OCI-LY7 (cell line): ENCODE measurements at regions of chr13 and their contacts with region 1.

Region 1: DNA sequence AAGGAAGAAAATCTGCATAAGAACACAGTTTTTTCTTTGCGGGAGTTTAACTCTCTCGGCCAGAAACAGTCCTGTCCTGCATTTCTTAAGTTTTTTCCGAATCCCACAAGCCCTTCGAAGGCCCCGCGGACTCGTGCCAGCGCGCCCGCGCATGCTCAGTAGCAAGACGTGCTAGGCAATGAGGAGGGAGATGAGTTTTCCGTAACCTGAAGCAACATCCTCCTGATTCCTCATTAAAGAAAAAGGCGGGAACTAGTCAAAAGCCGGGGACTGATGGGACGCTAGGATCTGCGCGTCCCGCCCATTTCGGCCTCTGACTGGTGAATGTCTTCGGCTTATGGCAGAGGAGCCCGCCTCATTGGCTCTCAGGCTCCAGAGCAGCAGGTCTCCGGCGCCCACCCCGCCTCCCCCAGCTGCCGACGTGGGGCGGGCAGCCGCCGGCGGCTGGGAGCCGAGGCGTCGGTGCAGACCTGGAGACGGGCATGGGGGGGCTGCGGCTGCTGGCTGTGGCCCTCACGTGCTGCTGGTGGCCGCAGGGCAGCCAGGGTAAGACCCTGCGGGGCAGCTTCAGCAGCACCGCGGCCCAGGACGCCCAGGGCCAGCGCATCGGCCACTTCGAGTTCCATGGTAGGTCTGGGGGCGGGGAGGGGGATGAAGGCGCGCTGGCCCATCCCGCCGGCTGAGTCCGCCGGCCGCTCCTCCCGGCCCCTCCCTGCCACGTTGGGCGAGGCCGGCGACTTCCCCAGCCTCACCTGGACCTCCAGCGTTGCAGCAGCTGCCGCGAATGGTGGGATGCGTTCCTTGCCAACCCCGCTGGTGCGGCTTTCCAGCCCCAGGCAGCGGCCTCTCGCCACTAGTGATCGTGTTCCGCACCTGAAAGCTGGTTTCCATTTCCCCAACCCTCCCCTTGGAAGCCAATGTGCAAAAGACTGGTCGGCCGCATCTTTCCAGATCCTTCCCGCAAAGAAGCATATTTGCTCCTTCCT is at the start of gene GPR180:
- DNase-seq: peak; percentile 95
- H3K4me3 ChIP-seq: peak within 1 kb of the TSS; percentile 94
- H3K27ac ChIP-seq: peak within 1 kb of the TSS; percentile 35
- H3K4me1 ChIP-seq: peaks cover 11% of the 10 kb centered on the region
- CTCF ChIP-seq: no peak
- total RNA-seq, gene GPR180: 3.7 and 3.9 TPM in 2 replicates

Region 2: DNA sequence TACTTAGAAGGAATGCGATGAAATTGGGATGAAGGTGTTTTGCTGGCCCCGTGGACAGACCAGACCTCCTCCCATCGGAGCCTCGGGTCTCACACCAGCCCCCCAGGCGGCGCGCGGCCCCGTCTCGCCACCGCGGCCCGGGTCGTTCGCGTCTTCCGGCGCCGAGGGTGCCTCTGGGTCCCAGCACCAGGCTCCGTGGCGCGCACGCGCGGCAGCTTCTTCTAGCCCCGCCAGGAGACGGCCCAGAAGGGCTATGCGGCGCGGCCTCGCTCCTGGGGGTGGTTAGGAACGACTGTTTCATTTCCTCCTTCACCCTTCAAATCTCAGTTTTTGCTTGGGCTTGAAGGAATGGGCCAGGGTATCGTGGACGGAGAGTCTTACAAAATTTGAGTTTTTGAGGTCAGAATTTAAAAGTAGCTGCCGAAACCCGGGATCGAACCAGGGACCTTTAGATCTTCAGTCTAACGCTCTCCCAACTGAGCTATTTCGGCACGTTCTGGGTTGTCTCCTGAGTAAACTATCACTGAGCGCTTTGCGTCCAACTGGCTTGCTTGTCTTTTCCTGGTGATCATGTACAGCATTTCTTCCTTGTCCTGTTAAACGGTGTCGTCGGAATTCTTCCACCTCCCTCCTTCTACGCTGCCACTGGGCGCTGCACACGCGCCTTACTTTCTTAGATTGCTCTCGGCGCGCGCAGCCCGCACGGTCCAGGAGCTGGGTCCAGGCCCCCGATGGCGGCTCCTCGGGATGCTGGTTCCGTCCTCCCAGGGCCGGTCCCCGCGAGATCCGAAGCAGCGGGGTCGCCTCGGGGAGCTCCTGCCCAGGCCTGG is 52.3 kb before region 1 on chr13:
- CTCF ChIA-PET with region 1: no interaction called
- POLR2A ChIA-PET with region 1: no interaction called
- intact Hi-C with region 1: loop called (anchors 5 kb)
- DNase-seq: peak; percentile 85
- H3K4me3 ChIP-seq: peak overlapping the region; percentile 66
- H3K27ac ChIP-seq: peak overlapping the region; percentile 64
- H3K4me1 ChIP-seq: peaks cover 8% of the 10 kb centered on the region
- CTCF ChIP-seq: no peak; the same call in 1 of the 2 replicates